PC-9 (cell line): ENCODE measurements at regions of chr13 and their contacts with region 1.

Region 1: GRCh38 chr13:73401769-73402168 is 343.0 kb downstream of the KLF5 start:
- DNase-seq: no peak
- H3K4me3 ChIP-seq: no peak overlapping the region
- H3K27ac ChIP-seq: no peak overlapping the region
- H3K4me1 ChIP-seq: peaks cover 34% of the 10 kb centered on the region
- H3K27me3 ChIP-seq: no peaks in the 10 kb centered on the region
- CTCF ChIP-seq: no peak

Region 2: GRCh38 chr13:75123428-75123827 is 1721.7 kb after region 1 on chr13:
- CTCF ChIA-PET with region 1: no interaction called
- POLR2A ChIA-PET with region 1: interaction called, 12 read pairs
- intact Hi-C with region 1: no loop called
- DNase-seq: no peak
- H3K4me3 ChIP-seq: no peak overlapping the region
- H3K27ac ChIP-seq: no peak overlapping the region
- H3K4me1 ChIP-seq: no peaks in the 10 kb centered on the region
- H3K27me3 ChIP-seq: no peaks in the 10 kb centered on the region
- CTCF ChIP-seq: no peak